Caco-2 (cell line): ENCODE measurements at regions of chr1 and their contacts with region 1.

Region 1: GRCh38 chr1:25895365-25895993 is 10.7 kb downstream of the STMN1 start:
- DNase-seq: peak; percentile 85 to 91
- H3K4me3 ChIP-seq: no peak overlapping the region
- H3K4me3 Mint-ChIP-seq: no peak overlapping the region
- H3K27ac Mint-ChIP-seq: no peak overlapping the region
- H3K4me1 ChIP-seq: peaks cover 40% of the 10 kb centered on the region
- H3K4me1 Mint-ChIP-seq: peaks cover 3% of the 10 kb centered on the region
- H3K27me3 ChIP-seq: no peaks in the 10 kb centered on the region
- H3K27me3 Mint-ChIP-seq: no peaks in the 10 kb centered on the region
- CTCF ChIP-seq: peak; percentile 86 to 95

Region 2: GRCh38 chr1:25837262-25837875 is 58.1 kb before region 1 on chr1:
- CTCF ChIA-PET with region 1: interaction called, 8 read pairs
- POLR2A ChIA-PET with region 1: no interaction called
- intact Hi-C with region 1: loop called (anchors 1 kb)
- DNase-seq: peak in 1 of 2 experiments; percentile 15
- H3K4me3 ChIP-seq: no peak overlapping the region
- H3K4me3 Mint-ChIP-seq: no peak overlapping the region
- H3K27ac Mint-ChIP-seq: peak overlapping the region; percentile 50
- H3K4me1 ChIP-seq: no peaks in the 10 kb centered on the region
- H3K4me1 Mint-ChIP-seq: peaks cover 6% of the 10 kb centered on the region
- H3K27me3 ChIP-seq: no peaks in the 10 kb centered on the region
- H3K27me3 Mint-ChIP-seq: no peaks in the 10 kb centered on the region
- CTCF ChIP-seq: peak; percentile 24 to 60

Region 3: GRCh38 chr1:25874934-25875855 is 20.3 kb before region 1 on chr1 and contains the start of gene PAQR7:
- CTCF ChIA-PET with region 1: interaction called, 25 read pairs
- POLR2A ChIA-PET with region 1: interaction called, 14 read pairs
- intact Hi-C with region 1: loop called (anchors 2 kb)
- DNase-seq: peak; percentile 85 to 88
- H3K4me3 ChIP-seq: peak within 1 kb of the TSS; percentile 40
- H3K4me3 Mint-ChIP-seq: peak within 1 kb of the TSS; percentile 99
- H3K27ac Mint-ChIP-seq: peak within 1 kb of the TSS; percentile 93
- H3K4me1 ChIP-seq: peaks cover 32% of the 10 kb centered on the region
- H3K4me1 Mint-ChIP-seq: peaks cover 16% of the 10 kb centered on the region
- H3K27me3 ChIP-seq: no peaks in the 10 kb centered on the region
- H3K27me3 Mint-ChIP-seq: no peaks in the 10 kb centered on the region
- CTCF ChIP-seq: peak in 1 of 2 experiments; percentile 24
- total RNA-seq, gene PAQR7: 22.3 and 26.0 TPM in 2 replicates

Region 4: DNA sequence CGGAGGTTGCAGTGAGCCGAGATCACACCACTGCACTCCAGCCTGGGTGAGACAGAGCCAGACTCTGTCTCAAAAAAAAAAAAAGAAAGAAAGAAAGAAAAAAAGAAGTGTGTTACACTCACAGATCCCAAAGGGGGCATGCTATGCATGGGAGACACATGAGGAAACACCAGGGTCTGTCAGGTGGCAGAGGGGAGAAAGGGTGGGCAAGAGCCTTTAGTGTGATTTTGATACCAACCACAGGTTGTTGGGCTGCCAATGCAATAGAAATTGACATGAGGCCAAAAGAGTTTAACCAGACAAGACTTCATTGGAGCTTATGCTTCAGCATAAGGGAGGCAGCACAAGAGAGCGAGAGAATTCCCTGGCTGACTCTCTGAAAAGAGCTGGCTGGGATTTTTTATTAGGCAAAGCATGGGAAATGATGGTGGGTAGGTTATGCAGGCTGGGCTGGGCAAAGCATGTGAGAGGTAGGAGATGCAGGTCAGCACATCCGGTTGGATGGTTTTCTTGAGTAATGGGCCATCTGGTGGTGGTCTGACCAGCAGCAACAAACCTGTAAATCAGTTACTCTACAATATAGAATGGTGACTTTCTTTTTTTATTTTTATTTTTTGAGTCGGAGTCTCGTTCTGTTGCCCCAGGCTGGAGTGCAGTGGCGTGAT is 114.4 kb after region 1 on chr1:
- CTCF ChIA-PET with region 1: interaction called, 10 read pairs
- POLR2A ChIA-PET with region 1: no interaction called
- intact Hi-C with region 1: loop called (anchors 1 kb)
- DNase-seq: peak; percentile 46 to 61
- H3K4me3 ChIP-seq: no peak overlapping the region
- H3K4me3 Mint-ChIP-seq: no peak overlapping the region
- H3K27ac Mint-ChIP-seq: no peak overlapping the region
- H3K4me1 ChIP-seq: no peaks in the 10 kb centered on the region
- H3K4me1 Mint-ChIP-seq: no peaks in the 10 kb centered on the region
- H3K27me3 ChIP-seq: no peaks in the 10 kb centered on the region
- H3K27me3 Mint-ChIP-seq: no peaks in the 10 kb centered on the region
- CTCF ChIP-seq: peak; percentile 47 to 48